ENCODE measurements at regions of chr4 and their contacts with region 1.

Region 1: DNA sequence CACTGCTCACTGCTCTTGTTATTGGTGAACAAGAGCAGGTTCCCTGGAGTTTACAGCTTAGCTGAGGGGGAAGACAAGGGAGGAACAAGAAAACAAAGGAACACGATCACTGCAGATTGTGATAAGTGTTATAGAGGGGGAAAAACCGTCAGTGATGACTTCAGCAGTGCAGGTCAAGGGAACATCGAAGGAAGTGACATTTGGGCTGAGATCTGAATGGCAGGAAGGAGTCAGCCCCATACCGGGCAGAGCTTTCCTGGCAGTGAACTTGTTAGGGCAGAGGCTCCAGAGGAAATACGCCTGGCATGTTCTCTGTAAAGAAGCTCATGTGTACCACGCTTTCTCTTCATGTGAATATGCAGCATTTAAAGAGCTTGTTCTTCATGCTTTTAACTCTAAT is 78.1 kb downstream of the LDB2 start:
- DNase-seq: no peak
- ATAC-seq: no peak
- H3K4me3 ChIP-seq: no peak overlapping the region
- H3K4me3 Mint-ChIP-seq: no peak overlapping the region
- H3K27ac ChIP-seq: no peak overlapping the region
- H3K27ac Mint-ChIP-seq: no peak overlapping the region
- H3K4me1 ChIP-seq: peaks cover 0 to 2% of the 10 kb centered on the region in 2 experiments
- H3K4me1 Mint-ChIP-seq: no peaks in the 10 kb centered on the region
- H3K27me3 ChIP-seq: no peaks in the 10 kb centered on the region
- H3K27me3 Mint-ChIP-seq: peaks cover 0 to 4% of the 10 kb centered on the region in 2 donors

Region 2: GRCh38 chr4:17336524-17336961 is 516.2 kb after region 1 on chr4:
- CTCF ChIA-PET with region 1: no interaction called
- POLR2A ChIA-PET with region 1: interaction called in 1 of 2 experiments, 12 read pairs
- DNase-seq: peak; percentile 42 to 87 (median 64)
- ATAC-seq: peak; percentile 96 to 99 (median 98)
- H3K4me3 ChIP-seq: no peak overlapping the region
- H3K4me3 Mint-ChIP-seq: peak overlapping the region in 2 of 3 donors; percentile 22 to 37
- H3K27ac ChIP-seq: peak overlapping the region; percentile 63
- H3K27ac Mint-ChIP-seq: peak overlapping the region; percentile 71 to 88
- H3K4me1 ChIP-seq: peaks cover 12 to 23% of the 10 kb centered on the region in 2 experiments
- H3K4me1 Mint-ChIP-seq: peaks cover 24 to 33% (median 31%) of the 10 kb centered on the region in 3 donors
- H3K27me3 ChIP-seq: no peaks in the 10 kb centered on the region
- H3K27me3 Mint-ChIP-seq: no peaks in the 10 kb centered on the region

Measured in T-cell (primary cell).